Heart left ventricle (tissue), 16 donors: ENCODE measurements at regions of chr1 and their contacts with region 1.

Region 1: DNA sequence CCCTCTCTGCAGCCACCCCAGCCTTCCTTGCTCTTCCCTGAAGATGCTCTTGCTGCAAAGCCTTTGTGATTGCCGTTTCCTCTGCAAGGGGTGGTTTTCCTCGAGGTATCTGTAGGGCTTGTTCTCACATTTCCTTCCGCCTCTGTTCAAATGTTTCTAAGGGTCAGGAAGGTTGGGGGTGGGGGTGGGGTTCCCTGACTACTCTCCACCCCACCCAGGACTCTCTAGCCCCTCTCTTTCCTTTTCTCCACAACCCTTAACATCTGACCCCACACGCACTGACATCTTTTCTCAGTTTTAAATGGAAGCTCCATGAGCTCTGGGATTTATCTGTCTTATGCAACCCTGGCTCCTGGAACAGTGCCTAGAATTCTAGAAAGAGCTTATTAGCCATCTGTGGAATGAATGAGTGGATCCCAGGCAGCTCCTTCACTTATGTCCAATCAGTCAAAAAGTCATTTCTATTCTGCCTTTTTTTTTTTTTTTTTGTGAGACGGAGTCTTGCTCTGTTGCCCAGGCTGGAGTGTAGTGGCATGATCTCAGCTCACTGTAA is 27.3 kb upstream of the ZNF362 start:
- DNase-seq: peak in 4 of 5 donors; percentile 37 to 76 (median 54)
- ATAC-seq: peak; percentile 55 to 92 (median 89)
- H3K4me3 ChIP-seq: no peak overlapping the region
- H3K27ac ChIP-seq: peak overlapping the region in 5 of 12 donors; percentile 2 to 35 (median 7)
- H3K4me1 ChIP-seq: peaks cover 0 to 29% (median 9%) of the 10 kb centered on the region in 12 donors
- H3K27me3 ChIP-seq: no peaks in the 10 kb centered on the region
- CTCF ChIP-seq: no peak
- POLR2A ChIP-seq: no peak

Region 2: GRCh38 chr1:33111970-33112369 is 117.0 kb before region 1 on chr1:
- intact Hi-C with region 1: no loop called
- DNase-seq: no peak
- ATAC-seq: no peak
- H3K4me3 ChIP-seq: no peak overlapping the region
- H3K27ac ChIP-seq: no peak overlapping the region
- H3K4me1 ChIP-seq: no peaks in the 10 kb centered on the region
- H3K27me3 ChIP-seq: no peaks in the 10 kb centered on the region
- CTCF ChIP-seq: peak in 6 of 12 donors; percentile 11 to 37 (median 20)
- POLR2A ChIP-seq: no peak

Region 3: DNA sequence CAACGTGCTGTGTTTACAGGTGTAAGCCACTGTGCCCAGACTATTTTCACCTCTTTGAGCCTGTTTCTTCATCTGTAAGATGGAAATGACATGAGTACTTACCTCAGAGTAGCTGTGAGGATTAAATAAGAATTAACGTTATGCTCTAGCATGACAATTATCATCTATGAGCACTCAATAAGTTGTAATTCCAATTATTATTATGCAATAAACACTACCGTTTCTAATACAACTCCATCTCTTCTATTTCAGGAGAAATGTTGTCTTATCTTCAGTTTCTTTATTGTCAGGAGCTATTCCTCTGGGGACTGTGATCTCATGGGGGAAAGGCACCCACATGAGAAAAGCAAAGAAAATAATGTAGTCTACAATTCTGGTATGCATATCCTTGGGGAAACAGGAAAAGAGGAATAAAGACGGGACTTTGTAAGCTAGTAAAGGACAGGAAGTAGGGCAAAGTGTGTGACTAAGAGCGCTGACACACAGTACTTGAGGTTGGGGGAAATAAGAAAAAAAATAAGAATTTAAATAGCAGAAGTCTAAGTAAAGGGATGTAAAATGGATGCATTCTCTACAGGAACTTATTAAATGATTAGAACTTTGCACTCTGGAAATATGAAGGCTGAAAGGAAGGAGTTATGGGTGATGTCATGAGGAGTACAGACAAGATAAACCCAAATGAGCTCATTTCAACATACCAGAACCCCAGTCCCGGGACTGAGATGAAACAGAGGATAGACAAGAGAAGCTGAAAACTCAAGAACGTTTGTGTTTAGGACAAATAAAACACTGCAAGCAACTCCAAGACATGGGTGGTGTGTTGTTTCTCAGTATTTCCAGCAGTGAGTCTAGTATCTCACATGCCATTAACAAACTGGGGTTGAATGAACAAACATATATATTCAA is 192.1 kb after region 1 on chr1:
- intact Hi-C with region 1: no loop called
- DNase-seq: no peak
- ATAC-seq: peak in 1 of 4 donors; percentile 51
- H3K4me3 ChIP-seq: no peak overlapping the region
- H3K27ac ChIP-seq: peak overlapping the region in 1 of 12 donors; percentile 77
- H3K4me1 ChIP-seq: peaks cover 0 to 19% (median 5%) of the 10 kb centered on the region in 12 donors
- H3K27me3 ChIP-seq: no peaks in the 10 kb centered on the region
- CTCF ChIP-seq: no peak
- POLR2A ChIP-seq: no peak

Region 4: DNA sequence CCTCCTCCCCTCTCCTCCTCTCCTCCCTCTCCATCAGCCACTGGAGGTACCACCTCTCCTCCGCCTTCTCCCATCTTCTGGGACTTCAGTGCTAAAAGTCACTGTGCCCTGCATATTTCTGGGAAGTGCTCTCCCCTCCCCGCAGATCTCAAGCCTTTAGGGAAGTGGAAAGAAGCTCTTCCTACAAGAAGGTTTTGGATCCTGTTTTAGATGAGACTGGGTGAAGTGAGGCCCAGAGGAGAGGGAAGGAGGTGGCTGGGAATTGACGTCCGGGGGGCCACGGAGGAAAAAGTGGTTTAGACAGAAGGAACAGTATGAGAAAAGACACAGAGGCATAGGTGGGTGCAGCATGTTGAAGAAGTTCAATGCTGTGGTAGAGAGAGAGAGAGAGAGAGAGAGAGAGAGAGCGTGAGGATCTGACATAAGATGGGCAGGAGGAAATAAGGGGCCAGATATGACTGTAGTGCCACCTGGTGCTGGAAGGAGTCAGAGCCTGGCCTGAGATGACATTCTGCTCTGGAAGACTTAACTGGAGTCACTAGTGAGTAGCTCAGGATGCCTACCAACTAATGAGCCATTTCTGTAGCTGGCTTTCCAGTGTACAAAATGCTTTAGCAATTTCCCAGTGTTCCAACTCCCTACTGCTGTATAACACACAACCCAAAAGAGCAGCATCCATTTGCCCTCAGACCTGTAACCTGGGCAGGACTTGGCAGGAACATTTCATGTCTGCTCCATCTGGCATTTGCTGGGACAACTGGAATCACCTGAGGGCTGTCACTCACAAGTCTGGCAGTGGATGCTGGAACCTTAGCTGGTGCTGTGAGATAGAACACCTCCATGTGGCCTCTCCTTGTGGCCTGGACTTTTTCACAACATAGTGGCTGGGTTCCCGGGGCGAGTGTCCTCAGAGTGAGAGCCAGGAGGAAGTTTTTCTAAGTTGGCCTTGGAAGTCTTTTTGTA is 226.8 kb after region 1 on chr1:
- intact Hi-C with region 1: loop called in 3 of 10 experiments (anchors 10 kb)
- DNase-seq: peak in 4 of 5 donors; percentile 51 to 64 (median 58)
- ATAC-seq: peak; percentile 68 to 89 (median 87)
- H3K4me3 ChIP-seq: no peak overlapping the region
- H3K27ac ChIP-seq: peak overlapping the region in 10 of 12 donors; percentile 11 to 66 (median 43)
- H3K4me1 ChIP-seq: peaks cover 0 to 47% (median 19%) of the 10 kb centered on the region in 12 donors
- H3K27me3 ChIP-seq: no peaks in the 10 kb centered on the region
- CTCF ChIP-seq: peak; percentile 43 to 69 (median 54)
- POLR2A ChIP-seq: no peak

Region 5: DNA sequence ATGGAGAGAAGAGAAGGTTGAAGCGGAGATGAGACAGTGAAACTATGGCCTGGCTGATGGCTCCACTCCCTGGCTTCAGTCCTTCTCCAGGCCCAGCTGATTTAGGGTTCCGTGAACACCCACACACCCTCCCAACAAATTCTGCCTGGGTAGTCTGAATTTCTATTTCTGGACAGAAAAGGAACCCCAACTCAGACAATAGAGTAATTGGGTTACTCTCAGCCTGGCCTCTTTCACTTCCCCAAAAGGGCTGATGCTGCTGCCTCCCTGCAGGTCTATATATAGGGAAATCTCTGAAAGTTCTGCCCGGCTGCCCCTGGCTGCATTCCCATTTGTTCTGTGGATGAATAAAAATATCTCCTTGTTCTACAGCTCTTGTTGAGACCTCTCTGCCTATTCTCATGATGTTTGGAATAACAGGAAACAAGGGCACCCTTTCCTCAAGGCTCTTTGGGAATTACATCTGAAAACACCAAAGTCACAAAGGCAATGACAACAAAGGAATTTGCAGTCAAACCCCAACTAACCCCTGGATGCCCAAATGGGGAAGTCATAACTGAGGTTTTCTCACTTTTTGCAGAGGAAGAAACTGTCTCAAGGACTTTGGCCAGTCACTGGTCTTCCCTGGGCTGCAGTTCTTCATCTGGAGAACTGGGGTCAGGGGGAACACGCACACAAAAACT is 232.1 kb after region 1 on chr1:
- intact Hi-C with region 1: loop called in 3 of 10 experiments (anchors 10 kb)
- DNase-seq: peak in 4 of 5 donors; percentile 63 to 80 (median 74)
- ATAC-seq: peak; percentile 75 to 81 (median 78)
- H3K4me3 ChIP-seq: peak overlapping the region in 2 of 12 donors; percentile 23 to 25
- H3K27ac ChIP-seq: peak overlapping the region; percentile 68 to 95 (median 86)
- H3K4me1 ChIP-seq: peaks cover 0 to 68% (median 33%) of the 10 kb centered on the region in 12 donors
- H3K27me3 ChIP-seq: no peaks in the 10 kb centered on the region
- CTCF ChIP-seq: no peak
- POLR2A ChIP-seq: no peak

Region 6: GRCh38 chr1:33599516-33600115 is 370.6 kb after region 1 on chr1:
- intact Hi-C with region 1: loop called in 1 of 10 experiments (anchors 10 kb)
- DNase-seq: no peak
- ATAC-seq: no peak
- H3K4me3 ChIP-seq: no peak overlapping the region
- H3K27ac ChIP-seq: no peak overlapping the region
- H3K4me1 ChIP-seq: peaks cover 0 to under 1% (median 0%) of the 10 kb centered on the region in 12 donors
- H3K27me3 ChIP-seq: no peaks in the 10 kb centered on the region
- CTCF ChIP-seq: no peak
- POLR2A ChIP-seq: no peak

Region 7: DNA sequence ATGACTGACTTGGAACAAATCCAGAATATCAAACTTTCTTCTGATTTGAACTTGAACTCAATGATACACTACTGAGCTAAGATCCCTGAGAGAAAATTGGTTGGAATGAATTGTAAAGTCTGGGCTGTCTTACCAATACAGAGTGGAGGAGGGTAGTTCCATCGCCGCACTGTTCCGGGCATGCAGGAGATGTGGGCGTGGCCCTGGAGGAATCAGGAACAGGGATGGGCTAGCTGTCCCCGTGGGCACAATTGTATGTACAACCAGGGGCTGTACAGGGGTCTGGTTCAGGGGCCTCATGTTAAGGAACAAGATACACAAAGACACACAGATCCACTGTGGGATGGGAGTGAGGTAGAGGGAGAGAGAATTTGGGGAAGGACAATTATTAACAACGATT is 387.8 kb after region 1 on chr1:
- intact Hi-C with region 1: loop called in 2 of 10 experiments (anchors 5 to 10 kb)
- DNase-seq: no peak
- ATAC-seq: no peak
- H3K4me3 ChIP-seq: no peak overlapping the region
- H3K27ac ChIP-seq: no peak overlapping the region
- H3K4me1 ChIP-seq: peaks cover 0 to 6% (median 0%) of the 10 kb centered on the region in 12 donors
- H3K27me3 ChIP-seq: peaks cover 0 to 13% (median 0%) of the 10 kb centered on the region in 9 donors
- CTCF ChIP-seq: no peak
- POLR2A ChIP-seq: no peak